ENCODE measurements at regions of chr18 and their contacts with region 1.

Region 1: DNA sequence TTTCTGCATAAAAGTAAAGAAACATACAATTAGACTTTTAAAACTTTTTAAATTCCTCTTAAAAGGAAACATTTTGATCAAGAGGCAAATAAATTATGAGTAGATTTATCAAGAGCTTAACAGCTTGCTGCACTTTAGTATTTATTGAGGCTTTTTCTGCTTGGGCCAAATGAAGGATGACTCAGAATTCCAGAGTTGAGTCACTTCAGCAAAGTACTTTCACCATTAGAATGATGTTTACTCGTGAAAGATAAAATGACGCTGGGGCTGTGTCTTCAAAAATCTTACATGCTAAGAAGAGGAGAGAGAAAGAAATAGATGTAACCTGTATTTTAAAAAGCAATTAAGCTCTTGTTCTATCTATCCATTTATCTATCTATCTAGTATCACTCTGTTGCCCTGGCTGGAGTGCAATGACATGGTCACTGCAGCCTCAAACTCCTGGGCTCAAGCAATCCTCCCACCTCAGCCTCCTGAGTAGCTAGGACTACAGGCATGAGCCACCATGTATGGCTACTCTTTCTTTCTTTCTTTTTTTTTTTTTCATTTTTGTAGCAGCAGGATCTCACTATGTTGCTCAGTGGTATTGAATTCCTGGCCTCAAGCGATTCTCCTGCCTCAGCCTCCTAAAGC is 75.3 kb upstream of the RIOK3 start:
- DNase-seq: no peak
- ATAC-seq: peak in 1 of 4 donors; percentile 70
- H3K4me3 ChIP-seq: no peak overlapping the region
- H3K27ac ChIP-seq: peak overlapping the region in 8 of 12 donors; percentile 0 to 73 (median 37)
- H3K4me1 ChIP-seq: peaks cover 0 to 12% (median 6%) of the 10 kb centered on the region in 12 donors
- H3K27me3 ChIP-seq: no peaks in the 10 kb centered on the region
- CTCF ChIP-seq: no peak
- POLR2A ChIP-seq: no peak

Region 2: GRCh38 chr18:22813648-22814328 is 564.0 kb before region 1 on chr18:
- intact Hi-C with region 1: loop called in 1 of 10 experiments (anchors 10 kb)
- DNase-seq: no peak
- ATAC-seq: peak in 3 of 4 donors; percentile 49 to 55 (median 54)
- H3K4me3 ChIP-seq: no peak overlapping the region
- H3K27ac ChIP-seq: no peak overlapping the region
- H3K4me1 ChIP-seq: no peaks in the 10 kb centered on the region
- H3K27me3 ChIP-seq: peaks cover 0 to 9% (median 0%) of the 10 kb centered on the region in 9 donors
- CTCF ChIP-seq: peak; percentile 22 to 68 (median 39)
- POLR2A ChIP-seq: no peak

Region 3: DNA sequence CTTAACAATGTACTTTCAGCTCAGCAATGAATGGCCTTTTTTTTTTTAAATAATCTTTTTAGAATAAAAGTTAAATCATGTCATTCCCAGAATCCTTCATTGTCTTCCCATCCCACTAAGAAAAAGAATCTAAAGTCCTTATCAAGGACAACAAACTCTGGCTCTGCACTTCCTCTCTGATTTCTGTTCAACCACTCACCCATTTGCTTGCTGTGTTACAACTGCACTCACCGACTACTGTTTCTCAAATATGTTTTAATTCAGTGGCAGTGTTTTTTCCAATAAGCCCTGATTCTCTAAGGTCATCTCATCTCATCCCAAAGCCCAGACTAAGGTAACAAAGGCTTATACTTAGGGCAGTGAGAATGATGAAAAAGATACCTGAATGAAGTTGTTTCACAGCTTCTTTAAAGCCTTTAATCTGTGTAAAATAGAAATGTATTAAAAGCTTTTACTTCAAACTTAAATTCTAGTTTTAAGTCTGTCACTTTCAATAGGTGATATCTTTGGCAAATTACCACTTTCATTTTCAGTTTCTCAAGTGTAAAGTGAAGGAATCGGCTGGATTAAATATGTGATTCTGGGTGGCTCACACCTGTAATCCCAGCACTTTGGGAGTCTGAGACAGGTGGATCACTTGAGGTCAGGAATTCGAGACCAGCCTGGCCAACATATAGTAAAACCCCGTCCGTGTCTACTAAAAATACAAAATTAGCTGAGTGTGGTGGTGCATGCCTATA is 357.1 kb before region 1 on chr18:
- intact Hi-C with region 1: loop called in 1 of 10 experiments (anchors 10 kb)
- DNase-seq: no peak
- ATAC-seq: no peak
- H3K4me3 ChIP-seq: peak overlapping the region in 1 of 12 donors; percentile 10
- H3K27ac ChIP-seq: no peak overlapping the region
- H3K4me1 ChIP-seq: peaks cover 0 to 12% (median 0%) of the 10 kb centered on the region in 12 donors
- H3K27me3 ChIP-seq: no peaks in the 10 kb centered on the region
- CTCF ChIP-seq: no peak
- POLR2A ChIP-seq: no peak

Region 4: GRCh38 chr18:23032030-23032582 is 345.7 kb before region 1 on chr18:
- intact Hi-C with region 1: loop called in 8 of 10 experiments (anchors 5 to 10 kb)
- DNase-seq: no peak
- ATAC-seq: no peak
- H3K4me3 ChIP-seq: no peak overlapping the region
- H3K27ac ChIP-seq: no peak overlapping the region
- H3K4me1 ChIP-seq: no peaks in the 10 kb centered on the region
- H3K27me3 ChIP-seq: no peaks in the 10 kb centered on the region
- CTCF ChIP-seq: no peak
- POLR2A ChIP-seq: no peak